ENCODE measurements at regions of chr1 and their contacts with region 1.

Region 1: GRCh38 chr1:162605225-162605927 is 26.9 kb upstream of the DDR2 start:
- DNase-seq: peak; percentile 100
- ATAC-seq: peak; percentile 95
- H3K4me3 ChIP-seq: peak overlapping the region; percentile 10; the same call in 1 of the 2 replicates
- H3K27ac ChIP-seq: peak overlapping the region; percentile 82
- H3K4me1 ChIP-seq: peaks cover 22% of the 10 kb centered on the region
- H3K27me3 ChIP-seq: no peaks in the 10 kb centered on the region
- CTCF ChIP-seq: no peak

Region 2: DNA sequence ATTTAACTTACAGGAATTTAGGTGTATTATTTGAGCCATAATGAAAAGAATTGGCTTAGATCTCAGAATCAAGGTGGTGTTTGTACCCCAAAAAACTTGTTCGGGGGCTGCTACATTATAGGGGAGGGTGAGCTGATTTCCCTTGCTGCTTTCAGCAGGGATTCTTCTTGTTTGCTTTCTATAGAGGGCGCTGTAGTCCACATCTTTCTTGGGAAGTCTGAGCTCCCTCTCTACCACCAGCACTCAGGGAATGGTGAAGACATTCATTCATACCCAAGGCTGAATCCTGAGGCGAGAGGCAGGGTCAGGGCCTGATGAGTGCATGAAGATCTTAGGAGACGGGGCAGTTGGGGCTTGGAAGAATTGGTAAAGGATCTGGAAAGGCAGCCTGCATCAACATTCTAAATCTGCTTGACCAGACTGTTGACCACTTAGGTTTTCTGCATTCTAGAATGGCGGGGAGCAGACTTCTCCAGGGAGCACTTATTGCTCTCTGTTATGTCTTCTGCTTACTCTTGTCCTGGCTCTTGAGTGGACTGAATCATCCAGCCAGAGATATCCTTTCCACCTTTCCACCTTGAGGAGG is 247.6 kb before region 1 on chr1:
- CTCF ChIA-PET with region 1: no interaction called
- POLR2A ChIA-PET with region 1: no interaction called
- intact Hi-C with region 1: loop called (anchors 1 kb)
- DNase-seq: peak; percentile 75
- ATAC-seq: peak; percentile 70
- H3K4me3 ChIP-seq: no peak overlapping the region
- H3K27ac ChIP-seq: no peak overlapping the region
- H3K4me1 ChIP-seq: no peaks in the 10 kb centered on the region
- H3K27me3 ChIP-seq: no peaks in the 10 kb centered on the region
- CTCF ChIP-seq: peak; percentile 92

Region 3: GRCh38 chr1:162497723-162498500 is 107.5 kb before region 1 on chr1 and contains the start of gene UHMK1:
- CTCF ChIA-PET with region 1: interaction called, 3 read pairs
- POLR2A ChIA-PET with region 1: interaction called, 31 read pairs
- intact Hi-C with region 1: no loop called
- DNase-seq: peak; percentile 91
- ATAC-seq: peak; percentile 93
- H3K4me3 ChIP-seq: peak within 1 kb of the TSS; percentile 77
- H3K27ac ChIP-seq: peak within 1 kb of the TSS; percentile 51
- H3K4me1 ChIP-seq: peaks cover 37% of the 10 kb centered on the region
- H3K27me3 ChIP-seq: no peaks in the 10 kb centered on the region
- CTCF ChIP-seq: no peak
- total RNA-seq, gene UHMK1: 69.4 and 70.4 TPM in 2 replicates

Region 4: DNA sequence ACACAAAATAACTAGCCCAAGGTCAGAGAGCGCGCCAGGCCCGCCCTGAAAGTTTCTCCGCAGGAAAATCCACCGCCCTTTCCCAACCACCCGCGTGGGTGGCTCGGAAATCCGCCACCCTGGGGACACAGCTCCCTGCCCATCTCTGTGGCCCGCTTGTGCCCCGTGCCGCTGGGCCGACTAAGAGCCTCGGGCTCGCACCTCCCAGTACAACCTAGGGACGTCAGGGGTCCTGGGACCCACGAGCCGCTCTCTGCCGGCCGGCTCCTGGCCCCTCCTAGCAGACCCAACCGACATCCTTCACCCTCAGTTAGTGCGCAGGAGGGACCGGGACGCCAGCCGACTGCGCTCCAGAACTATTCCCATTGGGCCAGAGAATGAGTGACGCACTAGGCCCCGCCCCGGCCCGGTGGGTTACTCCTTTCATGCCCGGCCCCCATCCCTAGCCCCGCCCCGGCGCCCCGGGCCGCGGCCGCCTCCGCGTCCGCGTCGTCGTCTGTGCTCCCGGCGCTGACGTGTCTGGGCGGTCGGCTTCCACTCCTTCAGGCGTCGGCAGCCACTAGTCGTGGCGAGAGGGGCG is 44.2 kb before region 1 on chr1:
- CTCF ChIA-PET with region 1: no interaction called
- POLR2A ChIA-PET with region 1: no interaction called
- intact Hi-C with region 1: loop called (anchors 1 kb)
- DNase-seq: peak; percentile 99
- ATAC-seq: peak; percentile 91
- H3K4me3 ChIP-seq: peak overlapping the region; percentile 94
- H3K27ac ChIP-seq: peak overlapping the region; percentile 69
- H3K4me1 ChIP-seq: peaks cover 36% of the 10 kb centered on the region
- H3K27me3 ChIP-seq: no peaks in the 10 kb centered on the region
- CTCF ChIP-seq: no peak

Region 5: DNA sequence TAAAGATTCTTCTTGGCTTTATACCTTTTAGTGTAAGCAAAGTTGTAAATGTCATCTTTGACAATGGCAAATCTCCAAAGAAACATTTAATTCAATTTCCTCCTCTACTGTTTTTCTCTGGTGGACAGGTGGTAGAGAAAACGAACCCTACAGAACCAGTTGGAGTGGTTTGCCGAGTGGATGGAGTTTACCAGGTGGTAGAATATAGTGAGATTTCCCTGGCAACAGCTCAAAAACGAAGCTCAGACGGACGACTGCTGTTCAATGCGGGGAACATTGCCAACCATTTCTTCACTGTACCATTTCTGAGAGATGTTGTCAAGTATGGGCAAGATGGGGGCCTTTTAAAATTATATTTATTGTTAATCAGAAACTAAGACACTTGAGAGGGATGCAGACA is 18.0 kb before region 1 on chr1:
- CTCF ChIA-PET with region 1: no interaction called
- POLR2A ChIA-PET with region 1: no interaction called
- intact Hi-C with region 1: loop called (anchors 1 kb)
- DNase-seq: peak; percentile 76
- ATAC-seq: no peak
- H3K4me3 ChIP-seq: no peak overlapping the region
- H3K27ac ChIP-seq: no peak overlapping the region
- H3K4me1 ChIP-seq: peaks cover 21% of the 10 kb centered on the region; the same call in 1 of the 2 replicates
- H3K27me3 ChIP-seq: no peaks in the 10 kb centered on the region
- CTCF ChIP-seq: no peak

Region 6: DNA sequence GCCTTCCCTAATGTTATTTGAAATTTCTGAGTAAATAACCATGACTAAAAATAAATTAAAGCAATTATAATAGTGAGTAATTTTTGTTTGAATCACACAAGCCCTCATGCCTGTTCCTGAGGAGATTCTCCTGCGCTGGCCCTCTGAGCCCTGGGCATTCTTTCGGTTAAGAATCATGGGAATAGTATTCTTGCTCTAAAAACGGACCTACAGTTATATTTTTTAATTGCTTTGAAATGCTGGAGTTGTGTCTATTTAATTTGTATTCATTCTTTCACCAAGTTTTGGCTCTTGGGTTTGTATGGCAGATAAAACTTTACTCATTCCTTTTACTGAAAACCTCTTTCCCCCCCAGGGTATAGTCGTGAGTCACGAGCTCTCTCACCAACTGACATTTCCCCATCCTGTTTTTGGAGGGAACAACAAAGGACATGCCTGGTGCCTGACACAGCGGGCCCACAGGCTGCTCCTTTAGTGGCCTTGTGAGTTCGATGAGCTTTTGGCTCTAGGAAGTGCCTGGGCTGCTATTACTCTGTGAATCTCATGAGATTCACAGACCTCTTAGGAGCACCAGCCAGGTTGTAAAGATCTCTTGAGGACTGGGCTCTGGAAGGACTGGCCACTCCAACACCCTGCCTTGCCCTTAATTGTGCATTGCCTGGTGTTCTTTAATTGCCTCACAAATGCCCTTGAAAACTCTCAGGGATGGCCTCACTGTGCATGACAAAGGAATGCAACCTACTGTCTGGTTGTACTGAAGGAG is 85.5 kb after region 1 on chr1:
- CTCF ChIA-PET with region 1: no interaction called
- POLR2A ChIA-PET with region 1: interaction called, 13 read pairs
- intact Hi-C with region 1: no loop called
- DNase-seq: peak; percentile 98
- ATAC-seq: peak; percentile 91
- H3K4me3 ChIP-seq: peak overlapping the region; percentile 12; the same call in 1 of the 2 replicates
- H3K27ac ChIP-seq: peak overlapping the region; percentile 78
- H3K4me1 ChIP-seq: peaks cover 28% of the 10 kb centered on the region
- H3K27me3 ChIP-seq: no peaks in the 10 kb centered on the region
- CTCF ChIP-seq: no peak